ENCODE measurements at regions of chr20 and their contacts with region 1.

Region 1: DNA sequence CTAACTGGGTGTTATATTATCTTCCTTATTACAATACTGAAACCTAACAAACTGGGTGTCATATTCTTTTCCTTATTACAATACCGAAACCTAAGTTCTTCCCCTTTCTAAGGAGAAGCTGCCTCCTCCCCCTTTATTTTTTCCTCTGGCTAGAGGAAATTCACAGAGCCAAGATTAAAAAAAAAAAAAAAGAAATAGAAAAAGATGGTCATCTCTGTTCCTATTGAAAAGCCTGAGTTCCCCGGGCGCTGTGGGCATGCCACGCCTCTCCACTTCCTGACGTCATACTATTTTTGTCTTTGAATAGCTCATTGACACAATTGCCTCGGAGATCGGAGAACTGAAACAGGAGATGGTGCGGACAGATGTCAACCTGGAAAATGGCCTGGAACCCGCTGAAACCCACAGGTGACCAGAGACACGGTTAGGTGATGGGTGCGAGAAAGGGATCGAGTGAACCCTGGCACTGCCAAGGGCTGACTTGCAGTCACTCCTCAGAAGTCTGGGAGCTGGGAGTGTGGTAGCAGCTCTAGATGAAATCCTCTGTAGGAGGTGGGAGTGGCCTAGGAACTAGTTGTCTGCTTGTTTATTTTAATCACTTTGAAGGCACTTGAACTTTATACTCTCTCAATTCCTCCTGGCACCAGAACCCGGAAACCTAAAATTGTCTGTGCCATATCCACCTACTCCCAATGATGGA is 82.2 kb upstream of the NAA20 start:
- DNase-seq: peak in 1 of 2 donors; percentile 81
- ATAC-seq: peak; percentile 47
- H3K4me3 ChIP-seq: no peak overlapping the region
- H3K27ac ChIP-seq: no peak overlapping the region
- H3K4me1 ChIP-seq: no peaks in the 10 kb centered on the region
- H3K27me3 ChIP-seq: no peaks in the 10 kb centered on the region

Region 2: DNA sequence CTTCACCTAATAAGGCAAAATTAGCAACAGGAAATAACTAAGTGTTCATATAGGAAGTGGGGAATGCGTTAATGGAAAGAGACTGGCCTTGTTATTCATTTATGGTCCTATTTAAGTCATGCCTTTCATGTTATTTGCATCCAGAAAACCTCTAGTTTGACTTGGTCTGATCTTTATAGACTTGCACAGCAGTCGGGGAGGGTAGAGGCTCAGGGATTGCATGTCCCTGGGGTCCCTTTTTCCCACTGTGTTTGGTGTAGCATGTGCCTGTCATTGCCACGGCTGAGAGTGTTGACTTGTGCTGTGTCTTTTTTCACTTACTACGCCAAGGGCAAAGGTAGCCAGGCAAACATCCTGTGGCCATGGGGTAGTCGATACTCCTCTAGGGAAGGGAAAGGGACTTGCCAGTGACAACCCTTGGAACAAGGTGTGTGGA is 282.3 kb before region 1 on chr20:
- intact Hi-C with region 1: no loop called
- DNase-seq: no peak
- ATAC-seq: no peak
- H3K4me3 ChIP-seq: no peak overlapping the region
- H3K27ac ChIP-seq: no peak overlapping the region
- H3K4me1 ChIP-seq: no peaks in the 10 kb centered on the region
- H3K27me3 ChIP-seq: no peaks in the 10 kb centered on the region

Region 3: GRCh38 chr20:19956976-19957375 is 22.0 kb after region 1 on chr20:
- intact Hi-C with region 1: loop called in 1 of 2 experiments (anchors 2 kb)
- DNase-seq: no peak
- ATAC-seq: no peak
- H3K4me3 ChIP-seq: no peak overlapping the region
- H3K27ac ChIP-seq: no peak overlapping the region
- H3K4me1 ChIP-seq: no peaks in the 10 kb centered on the region
- H3K27me3 ChIP-seq: no peaks in the 10 kb centered on the region

Region 4: DNA sequence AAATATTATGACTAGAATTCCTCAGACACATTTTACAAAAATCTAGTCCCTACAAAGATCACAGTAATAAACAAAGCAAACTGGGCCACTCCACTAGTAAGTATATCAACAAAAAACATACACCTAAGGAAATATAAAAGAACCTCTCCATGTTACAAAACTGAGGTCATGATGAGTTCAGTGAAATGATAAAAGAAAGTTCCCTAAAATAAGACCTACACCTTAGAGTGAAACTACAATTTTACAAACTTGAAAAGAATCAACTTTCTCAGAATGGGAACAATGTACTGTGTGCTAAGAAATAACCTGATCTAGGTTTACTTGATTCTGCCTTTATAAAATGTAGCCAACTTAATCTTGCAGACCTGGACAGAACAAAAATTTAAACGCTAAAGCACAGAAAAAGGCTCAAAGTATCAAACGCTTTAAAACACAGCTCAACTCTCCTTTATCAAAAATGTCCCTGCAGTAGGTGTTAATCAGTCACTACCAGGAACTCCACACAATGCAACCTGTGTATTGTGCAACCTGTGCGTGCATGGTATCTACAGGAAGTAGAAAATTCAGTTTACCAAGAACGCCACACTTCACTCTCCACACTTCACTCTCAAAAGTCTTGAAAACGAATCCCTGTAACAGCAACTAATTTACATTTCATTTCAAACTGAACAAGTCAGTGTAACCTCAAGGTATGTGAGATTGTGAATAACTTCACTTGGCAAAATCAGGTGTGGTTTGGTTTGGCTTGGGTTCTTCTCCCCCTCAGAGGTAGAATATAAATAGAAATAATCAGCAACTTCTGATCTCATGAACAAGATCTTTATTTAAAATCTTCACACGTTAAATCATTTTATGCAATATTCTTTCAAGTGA is 775.7 kb after region 1 on chr20:
- intact Hi-C with region 1: no loop called
- DNase-seq: no peak
- ATAC-seq: no peak
- H3K4me3 ChIP-seq: no peak overlapping the region
- H3K27ac ChIP-seq: no peak overlapping the region
- H3K4me1 ChIP-seq: peaks cover 0 to 5% of the 10 kb centered on the region in 2 donors
- H3K27me3 ChIP-seq: no peaks in the 10 kb centered on the region